ENCODE measurements at regions of chr10 and their contacts with region 1.

Region 1: GRCh38 chr10:122342293-122343134 is 32.0 kb upstream of the PLEKHA1 start:
- DNase-seq: peak; percentile 51
- H3K4me3 Mint-ChIP-seq: no peak overlapping the region
- H3K27ac Mint-ChIP-seq: no peak overlapping the region
- H3K4me1 Mint-ChIP-seq: peaks cover 19% of the 10 kb centered on the region
- H3K27me3 Mint-ChIP-seq: no peaks in the 10 kb centered on the region
- CTCF ChIP-seq: peak; percentile 41

Region 2: GRCh38 chr10:122374870-122375678 is 32.6 kb after region 1 on chr10:
- CTCF ChIA-PET with region 1: interaction called, 4 read pairs
- intact Hi-C with region 1: loop called (anchors 5 kb)
- DNase-seq: peak; percentile 70
- H3K4me3 Mint-ChIP-seq: peak overlapping the region; percentile 82
- H3K27ac Mint-ChIP-seq: peak overlapping the region; percentile 67
- H3K4me1 Mint-ChIP-seq: peaks cover 12% of the 10 kb centered on the region
- H3K27me3 Mint-ChIP-seq: no peaks in the 10 kb centered on the region
- CTCF ChIP-seq: no peak

Region 3: GRCh38 chr10:122435212-122435827 is 92.8 kb after region 1 on chr10:
- CTCF ChIA-PET with region 1: interaction called, 4 read pairs
- intact Hi-C with region 1: loop called (anchors 1 kb)
- DNase-seq: no peak
- H3K4me3 Mint-ChIP-seq: no peak overlapping the region
- H3K27ac Mint-ChIP-seq: no peak overlapping the region
- H3K4me1 Mint-ChIP-seq: no peaks in the 10 kb centered on the region
- H3K27me3 Mint-ChIP-seq: no peaks in the 10 kb centered on the region
- CTCF ChIP-seq: no peak

Region 4: GRCh38 chr10:122632031-122632430 is 289.5 kb after region 1 on chr10:
- CTCF ChIA-PET with region 1: no interaction called
- intact Hi-C with region 1: no loop called
- DNase-seq: no peak
- H3K4me3 Mint-ChIP-seq: no peak overlapping the region
- H3K27ac Mint-ChIP-seq: no peak overlapping the region
- H3K4me1 Mint-ChIP-seq: no peaks in the 10 kb centered on the region
- H3K27me3 Mint-ChIP-seq: peaks cover 27% of the 10 kb centered on the region
- CTCF ChIP-seq: no peak

Measured in Calu3 (cell line).